Activated naive CD4-positive, alpha-beta T cell treated with anti-CD3 and anti-CD28 coated beads for 36 hours (primary cell): ENCODE measurements at regions of chr19 and their contacts with region 1.

Region 1: GRCh38 chr19:50025024-50025789 is at the start of gene VRK3:
- DNase-seq: peak; percentile 99
- H3K4me3 Mint-ChIP-seq: peak within 1 kb of the TSS; percentile 95
- H3K27ac Mint-ChIP-seq: peak within 1 kb of the TSS; percentile 97
- H3K4me1 Mint-ChIP-seq: peaks cover 50% of the 10 kb centered on the region
- H3K27me3 Mint-ChIP-seq: no peaks in the 10 kb centered on the region
- total RNA-seq, gene VRK3: 45.7 to 54.3 TPM

Region 2: GRCh38 chr19:49817964-49818648 is 207.1 kb before region 1 on chr19 and contains the start of gene MED25:
- CTCF ChIA-PET with region 1: no interaction called
- intact Hi-C with region 1: loop called (anchors 1 kb)
- DNase-seq: peak; percentile 87
- H3K4me3 Mint-ChIP-seq: peak within 1 kb of the TSS; percentile 92
- H3K27ac Mint-ChIP-seq: peak within 1 kb of the TSS; percentile 99
- H3K4me1 Mint-ChIP-seq: peaks cover 16% of the 10 kb centered on the region
- H3K27me3 Mint-ChIP-seq: no peaks in the 10 kb centered on the region
- total RNA-seq, gene MED25: 32.4 to 39.2 TPM

Region 3: GRCh38 chr19:49896863-49897621 is 128.2 kb before region 1 on chr19 and contains the start of gene IL4I1:
- CTCF ChIA-PET with region 1: no interaction called
- intact Hi-C with region 1: loop called (anchors 1 kb)
- DNase-seq: peak; percentile 85
- H3K4me3 Mint-ChIP-seq: peak within 1 kb of the TSS; percentile 67
- H3K27ac Mint-ChIP-seq: peak within 1 kb of the TSS; percentile 97
- H3K4me1 Mint-ChIP-seq: peaks cover 31% of the 10 kb centered on the region
- H3K27me3 Mint-ChIP-seq: no peaks in the 10 kb centered on the region
- total RNA-seq, gene IL4I1: 7.2 to 7.5 TPM

Region 4: DNA sequence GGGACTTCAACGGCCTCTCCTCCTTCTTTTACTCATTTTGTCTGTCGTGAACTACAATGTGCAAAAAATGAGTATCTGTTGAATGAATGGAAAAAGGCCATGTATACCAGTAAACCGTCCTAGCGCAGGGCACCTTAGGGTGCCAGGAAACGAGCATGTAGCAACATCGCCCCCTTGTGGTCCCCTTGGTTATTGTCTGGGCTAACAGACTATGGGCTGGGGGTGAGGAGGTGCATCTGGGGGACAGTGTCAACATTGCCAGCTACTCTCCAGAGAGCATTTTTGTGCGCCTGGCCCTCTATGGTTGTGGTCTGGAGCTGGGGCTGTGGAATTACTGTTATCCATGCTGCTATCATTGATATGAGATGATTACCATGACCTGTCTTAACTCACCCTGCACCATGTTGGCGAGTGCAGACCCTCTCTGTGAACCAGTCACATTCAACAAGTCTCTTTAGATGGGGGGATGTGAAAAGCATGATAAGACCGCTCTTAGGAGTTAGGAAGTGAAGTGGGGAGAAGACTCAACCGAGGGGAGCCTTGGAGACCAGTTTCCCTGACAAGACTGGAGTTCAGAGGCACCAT is 41.5 kb before region 1 on chr19:
- CTCF ChIA-PET with region 1: no interaction called
- intact Hi-C with region 1: loop called (anchors 1 kb)
- DNase-seq: peak; percentile 90
- H3K4me3 Mint-ChIP-seq: no peak overlapping the region
- H3K27ac Mint-ChIP-seq: no peak overlapping the region
- H3K4me1 Mint-ChIP-seq: peaks cover 9% of the 10 kb centered on the region
- H3K27me3 Mint-ChIP-seq: no peaks in the 10 kb centered on the region

Region 5: DNA sequence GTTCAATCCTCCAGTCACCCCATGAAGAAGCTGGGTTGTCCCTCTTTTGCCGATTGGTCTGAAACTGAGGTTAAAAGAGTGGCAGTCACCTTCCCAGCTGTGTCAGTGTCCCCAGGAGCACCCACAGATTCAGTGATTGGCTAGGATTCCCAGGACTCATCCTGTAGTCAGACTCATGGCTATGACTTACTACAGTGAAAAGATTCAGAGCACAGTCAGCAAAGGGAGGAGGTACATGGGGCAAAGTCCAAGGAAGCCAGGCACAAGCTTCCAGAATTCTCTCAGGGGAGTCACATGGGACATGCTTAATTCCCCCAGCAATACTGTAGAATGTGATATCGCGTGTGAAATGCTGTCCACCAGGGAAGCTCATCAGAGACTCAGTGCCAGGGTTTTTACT is 14.8 kb after region 1 on chr19:
- CTCF ChIA-PET with region 1: no interaction called
- intact Hi-C with region 1: no loop called
- DNase-seq: no peak
- H3K4me3 Mint-ChIP-seq: no peak overlapping the region
- H3K27ac Mint-ChIP-seq: no peak overlapping the region
- H3K4me1 Mint-ChIP-seq: no peaks in the 10 kb centered on the region
- H3K27me3 Mint-ChIP-seq: no peaks in the 10 kb centered on the region

Region 6: DNA sequence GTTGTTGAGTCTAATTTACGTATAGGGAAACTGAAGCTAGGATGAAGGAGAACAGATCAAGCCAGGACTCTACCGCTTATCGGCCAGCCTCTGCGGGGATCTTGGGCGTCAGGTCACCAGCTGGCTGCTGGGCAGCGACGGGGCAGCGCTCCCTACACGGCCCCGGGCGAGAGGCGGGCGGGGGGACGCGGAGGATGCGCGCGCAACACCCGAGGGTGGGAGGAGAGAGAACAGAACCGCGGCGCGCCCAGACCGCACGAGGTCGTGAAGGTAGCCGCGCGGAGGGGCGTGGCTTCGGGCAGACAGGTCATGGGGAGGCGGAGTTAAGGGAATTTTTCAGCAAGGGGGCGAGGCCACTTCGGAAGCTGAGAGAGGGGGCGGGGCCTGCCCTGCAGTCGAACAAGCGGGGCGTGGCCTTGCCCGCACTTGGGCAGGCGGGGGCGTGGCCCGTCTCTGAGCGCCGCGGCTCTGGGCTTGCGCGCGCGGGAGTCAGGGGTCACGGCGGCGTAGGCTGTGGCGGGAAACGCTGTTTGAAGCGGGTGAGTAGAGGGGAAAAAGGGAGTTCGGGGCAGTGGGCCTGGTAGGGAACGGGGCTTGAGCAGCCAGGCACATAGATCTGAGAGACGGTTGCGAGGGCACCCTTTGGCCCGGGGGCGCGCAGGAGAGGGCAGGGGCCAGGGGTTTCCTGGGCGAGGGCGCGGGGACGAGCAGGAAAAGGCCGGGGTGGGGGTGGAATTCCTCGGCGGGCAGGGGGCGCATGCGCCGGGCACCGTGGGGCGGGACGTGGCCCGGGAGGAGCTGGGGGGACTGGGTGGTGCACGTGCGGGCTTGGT is 358.9 kb after region 1 on chr19 and contains the start of gene POLD1:
- CTCF ChIA-PET with region 1: no interaction called
- intact Hi-C with region 1: loop called (anchors 5 kb)
- DNase-seq: peak; percentile 99
- H3K4me3 Mint-ChIP-seq: peak within 1 kb of the TSS; percentile 98
- H3K27ac Mint-ChIP-seq: peak within 1 kb of the TSS; percentile 95
- H3K4me1 Mint-ChIP-seq: peaks cover 36% of the 10 kb centered on the region
- H3K27me3 Mint-ChIP-seq: no peaks in the 10 kb centered on the region
- total RNA-seq, gene POLD1: 221 to 224 TPM

Region 7: DNA sequence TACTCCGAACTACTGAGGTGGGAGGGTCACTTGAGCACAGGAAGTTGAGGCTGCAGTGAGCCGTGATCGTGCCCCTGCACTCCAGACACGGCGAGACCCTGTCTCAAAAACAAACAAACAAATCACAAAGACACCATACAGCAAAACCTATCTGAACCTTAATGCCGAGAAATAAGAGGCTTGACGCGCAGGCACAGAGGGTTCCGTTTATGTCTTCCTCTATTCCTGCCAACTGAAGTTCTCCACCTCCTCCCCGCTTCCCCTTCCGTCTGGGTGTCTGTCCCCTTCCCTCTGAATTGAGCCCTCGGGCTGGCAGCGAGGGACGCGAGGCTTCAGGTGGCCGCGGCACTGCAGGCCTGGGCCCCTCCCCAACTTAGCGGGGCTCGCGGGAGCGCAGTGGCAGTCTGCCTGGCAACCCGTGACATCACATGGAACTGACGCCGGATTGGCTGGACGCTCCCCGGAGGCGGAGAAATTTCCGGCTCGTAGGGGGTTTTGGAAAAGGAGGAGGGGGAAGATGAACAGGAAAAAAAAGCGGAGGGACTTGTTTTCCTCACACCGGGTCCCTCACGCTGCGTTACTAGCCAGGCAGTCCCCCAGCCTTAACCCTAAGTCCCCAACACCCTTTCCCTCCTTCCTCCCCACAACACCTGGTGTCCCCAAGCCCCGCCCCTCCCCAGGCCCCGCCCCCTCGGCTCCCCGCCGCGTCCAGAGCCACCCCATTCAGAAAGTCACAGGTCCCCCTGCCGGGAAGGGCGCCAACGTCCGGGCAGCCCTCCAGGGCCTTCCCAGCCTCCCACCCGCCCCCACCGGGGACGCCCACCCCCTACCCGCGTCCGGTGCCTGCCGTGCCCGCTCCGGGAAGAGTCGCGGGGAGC is 406.4 kb after region 1 on chr19:
- CTCF ChIA-PET with region 1: no interaction called
- intact Hi-C with region 1: no loop called
- DNase-seq: peak; percentile 93
- H3K4me3 Mint-ChIP-seq: peak overlapping the region; percentile 90
- H3K27ac Mint-ChIP-seq: peak overlapping the region; percentile 88
- H3K4me1 Mint-ChIP-seq: peaks cover 17% of the 10 kb centered on the region
- H3K27me3 Mint-ChIP-seq: peaks cover 11% of the 10 kb centered on the region